Naive thymus-derived CD4-positive, alpha-beta T cell (primary cell): ENCODE measurements at regions of chr10 and their contacts with region 1.

Region 1: GRCh38 chr10:79608505-79609375 is 2.0 kb upstream of the SFTPA1 start:
- DNase-seq: peak in 6 of 9 donors; percentile 7 to 51 (median 15)
- ATAC-seq: peak; percentile 38
- H3K4me3 ChIP-seq: no peak overlapping the region
- H3K4me3 Mint-ChIP-seq: no peak overlapping the region
- H3K27ac ChIP-seq: no peak overlapping the region
- H3K27ac Mint-ChIP-seq: no peak overlapping the region
- H3K4me1 ChIP-seq: no peaks in the 10 kb centered on the region
- H3K4me1 Mint-ChIP-seq: no peaks in the 10 kb centered on the region
- H3K27me3 ChIP-seq: no peaks in the 10 kb centered on the region
- H3K27me3 Mint-ChIP-seq: peaks cover 4 to 12% (median 7%) of the 10 kb centered on the region in 5 donors

Region 2: GRCh38 chr10:79542626-79543025 is 66.1 kb before region 1 on chr10:
- CTCF ChIA-PET with region 1: no interaction called
- POLR2A ChIA-PET with region 1: no interaction called
- intact Hi-C with region 1: loop called in 1 of 2 experiments (anchors 1 kb)
- DNase-seq: no peak
- ATAC-seq: peak; percentile 50
- H3K4me3 ChIP-seq: no peak overlapping the region
- H3K4me3 Mint-ChIP-seq: no peak overlapping the region
- H3K27ac ChIP-seq: no peak overlapping the region
- H3K27ac Mint-ChIP-seq: peak overlapping the region in 1 of 9 donors; percentile 3
- H3K4me1 ChIP-seq: peaks cover 0 to 2% of the 10 kb centered on the region in 2 donors
- H3K4me1 Mint-ChIP-seq: peaks cover 4 to 50% (median 10%) of the 10 kb centered on the region in 7 donors
- H3K27me3 ChIP-seq: no peaks in the 10 kb centered on the region
- H3K27me3 Mint-ChIP-seq: no peaks in the 10 kb centered on the region

Region 3: GRCh38 chr10:79562135-79562756 is 46.5 kb before region 1 on chr10:
- CTCF ChIA-PET with region 1: no interaction called
- POLR2A ChIA-PET with region 1: no interaction called
- intact Hi-C with region 1: loop called in 1 of 2 experiments (anchors 1 kb)
- DNase-seq: peak; percentile 26 to 67 (median 48)
- ATAC-seq: peak; percentile 75
- H3K4me3 ChIP-seq: no peak overlapping the region
- H3K4me3 Mint-ChIP-seq: peak overlapping the region in 7 of 10 donors; percentile 1 to 53 (median 33)
- H3K27ac ChIP-seq: no peak overlapping the region
- H3K27ac Mint-ChIP-seq: no peak overlapping the region
- H3K4me1 ChIP-seq: no peaks in the 10 kb centered on the region
- H3K4me1 Mint-ChIP-seq: peaks cover 0 to 9% (median 7%) of the 10 kb centered on the region in 7 donors
- H3K27me3 ChIP-seq: no peaks in the 10 kb centered on the region
- H3K27me3 Mint-ChIP-seq: peaks cover 11 to 24% (median 23%) of the 10 kb centered on the region in 5 donors